Natural killer cell (primary cell): ENCODE measurements at regions of chr9 and their contacts with region 1.

Region 1: GRCh38 chr9:129641746-129642513 is at the start of gene ASB6:
- DNase-seq: peak; percentile 93 to 98
- ATAC-seq: peak; percentile 88 to 97 (median 89)
- H3K4me3 ChIP-seq: peak within 1 kb of the TSS; percentile 90
- H3K4me3 Mint-ChIP-seq: peak within 1 kb of the TSS; percentile 89
- H3K27ac ChIP-seq: peak within 1 kb of the TSS; percentile 67
- H3K27ac Mint-ChIP-seq: peak within 1 kb of the TSS; percentile 80 to 82
- H3K4me1 ChIP-seq: peaks cover 23% of the 10 kb centered on the region
- H3K4me1 Mint-ChIP-seq: peaks cover 6 to 37% of the 10 kb centered on the region in 2 donors
- H3K27me3 ChIP-seq: no peaks in the 10 kb centered on the region
- H3K27me3 Mint-ChIP-seq: no peaks in the 10 kb centered on the region
- CTCF ChIP-seq: peak; percentile 100
- total RNA-seq, gene ASB6: 21.9 to 35.4 (median 32.4) TPM

Region 2: GRCh38 chr9:129550199-129550839 is 91.6 kb before region 1 on chr9:
- intact Hi-C with region 1: no loop called
- DNase-seq: peak in 1 of 2 donors; percentile 33
- ATAC-seq: peak; percentile 26 to 56 (median 27)
- H3K4me3 ChIP-seq: no peak overlapping the region
- H3K4me3 Mint-ChIP-seq: peak overlapping the region; percentile 70
- H3K27ac ChIP-seq: no peak overlapping the region
- H3K27ac Mint-ChIP-seq: no peak overlapping the region
- H3K4me1 ChIP-seq: peaks cover 10% of the 10 kb centered on the region
- H3K4me1 Mint-ChIP-seq: peaks cover 4 to 11% of the 10 kb centered on the region in 2 donors
- H3K27me3 ChIP-seq: peaks cover 16% of the 10 kb centered on the region
- H3K27me3 Mint-ChIP-seq: peaks cover 39 to 41% of the 10 kb centered on the region in 2 donors
- CTCF ChIP-seq: no peak

Region 3: DNA sequence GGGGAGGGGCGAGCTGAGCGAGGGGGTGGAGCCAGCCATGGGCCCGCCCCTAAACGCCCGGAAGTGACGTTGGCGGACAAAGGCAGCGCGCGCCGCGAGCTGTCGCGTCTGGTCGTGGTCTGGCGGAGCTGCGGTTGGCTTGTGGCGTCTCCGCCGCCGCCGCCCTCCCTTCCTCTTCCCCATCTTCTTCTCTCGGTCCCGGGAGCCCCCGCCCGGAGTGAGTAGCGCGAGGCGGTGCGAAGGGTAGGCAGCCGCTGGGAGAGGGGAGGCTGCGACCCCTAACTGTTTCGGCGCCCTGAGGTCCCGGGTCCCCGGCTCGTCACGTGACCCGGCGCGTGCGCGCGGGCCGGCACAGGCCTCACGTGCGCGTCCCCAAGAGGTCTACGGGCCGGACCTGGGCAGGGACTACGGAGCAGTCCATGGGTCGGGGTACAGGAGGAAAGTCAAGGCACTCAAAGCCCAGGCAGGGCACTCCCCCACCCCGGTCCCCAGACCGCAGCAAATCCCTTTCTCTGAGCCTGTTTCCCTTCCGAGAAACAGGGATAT is 15.8 kb before region 1 on chr9 and contains the start of gene NTMT1:
- intact Hi-C with region 1: loop called (anchors 1 kb)
- DNase-seq: peak; percentile 92 to 94
- ATAC-seq: peak; percentile 86 to 92 (median 89)
- H3K4me3 ChIP-seq: peak within 1 kb of the TSS; percentile 90
- H3K4me3 Mint-ChIP-seq: peak within 1 kb of the TSS; percentile 84
- H3K27ac ChIP-seq: peak within 1 kb of the TSS; percentile 91
- H3K27ac Mint-ChIP-seq: peak within 1 kb of the TSS; percentile 93
- H3K4me1 ChIP-seq: peaks cover 49% of the 10 kb centered on the region
- H3K4me1 Mint-ChIP-seq: peaks cover 42 to 48% of the 10 kb centered on the region in 2 donors
- H3K27me3 ChIP-seq: peaks cover 8% of the 10 kb centered on the region
- H3K27me3 Mint-ChIP-seq: peaks cover 4 to 8% of the 10 kb centered on the region in 2 donors
- CTCF ChIP-seq: no peak
- total RNA-seq, gene NTMT1: 17.1 to 23.5 (median 17.1) TPM

Region 4: DNA sequence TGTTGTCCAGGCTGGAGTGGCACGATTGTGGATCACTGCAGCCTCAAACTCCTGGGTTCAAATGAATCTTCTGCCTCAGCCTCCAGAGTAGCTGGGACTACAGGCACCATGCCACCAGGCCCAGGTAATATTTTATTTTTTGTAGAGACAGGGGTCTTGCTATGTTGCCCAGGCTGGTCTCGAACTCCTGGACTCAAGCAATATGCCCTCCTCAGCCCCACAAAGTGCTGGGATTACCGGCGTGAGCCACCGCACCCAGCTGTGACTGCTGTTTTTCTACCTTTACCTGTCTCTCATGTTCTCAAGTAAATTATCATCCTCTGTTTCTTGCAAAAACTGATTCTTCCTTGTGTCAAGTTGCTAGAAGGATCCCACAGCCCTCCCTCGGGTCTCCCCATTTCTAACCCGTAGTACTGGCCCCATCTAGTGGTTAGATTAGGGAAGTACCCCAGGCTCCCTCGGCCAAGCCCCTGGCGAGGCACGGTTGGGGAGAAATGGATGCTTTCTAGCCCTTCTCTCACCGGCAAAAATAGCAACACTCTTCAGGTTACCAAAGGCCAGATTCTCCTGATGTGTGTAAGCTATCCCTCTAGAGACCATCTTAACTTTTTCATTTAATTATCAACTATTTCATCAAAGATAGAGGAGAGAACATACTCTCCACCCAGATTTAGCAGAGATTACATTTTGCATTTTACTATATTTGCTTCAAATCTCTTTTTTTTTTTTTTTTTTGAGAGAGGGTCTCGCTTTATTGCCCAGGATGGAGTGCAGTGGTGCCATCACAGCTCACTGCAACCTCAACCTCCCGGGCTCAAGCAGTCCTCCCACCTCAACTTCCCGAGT is 141.8 kb after region 1 on chr9:
- intact Hi-C with region 1: loop called (anchors 1 kb)
- DNase-seq: peak; percentile 50 to 84
- ATAC-seq: peak; percentile 93 to 100 (median 99)
- H3K4me3 ChIP-seq: no peak overlapping the region
- H3K4me3 Mint-ChIP-seq: no peak overlapping the region
- H3K27ac ChIP-seq: no peak overlapping the region
- H3K27ac Mint-ChIP-seq: no peak overlapping the region
- H3K4me1 ChIP-seq: no peaks in the 10 kb centered on the region
- H3K4me1 Mint-ChIP-seq: peaks cover 0 to 6% of the 10 kb centered on the region in 2 donors
- H3K27me3 ChIP-seq: no peaks in the 10 kb centered on the region
- H3K27me3 Mint-ChIP-seq: peaks cover 23 to 27% of the 10 kb centered on the region in 2 donors
- CTCF ChIP-seq: peak; percentile 84